HepG2 (cell line): ENCODE measurements at regions of chr7 and their contacts with region 1.

Region 1: GRCh38 chr7:114865564-114865963 is 56.3 kb upstream of the MDFIC start:
- DNase-seq: peak; percentile 8
- ATAC-seq: peak; percentile 81
- H3K4me3 ChIP-seq: no peak overlapping the region
- H3K27ac ChIP-seq: no peak overlapping the region
- H3K4me1 ChIP-seq: no peaks in the 10 kb centered on the region
- H3K27me3 ChIP-seq: no peaks in the 10 kb centered on the region
- CTCF ChIP-seq: peak; percentile 72
- EP300 ChIP-seq: no peak
- POLR2A ChIP-seq: no peak
- RAD21 ChIP-seq: 0 out of 2 replicates have a peak, but pooled peaks have one; percentile 27

Region 2: GRCh38 chr7:113314594-113314993 is 1551.0 kb before region 1 on chr7:
- CTCF ChIA-PET with region 1: no interaction called
- POLR2A ChIA-PET with region 1: no interaction called
- in situ Hi-C with region 1: no loop called
- intact Hi-C with region 1: no loop called
- DNase-seq: no peak
- ATAC-seq: no peak
- H3K4me3 ChIP-seq: no peak overlapping the region
- H3K27ac ChIP-seq: no peak overlapping the region
- H3K4me1 ChIP-seq: no peaks in the 10 kb centered on the region
- H3K27me3 ChIP-seq: no peaks in the 10 kb centered on the region
- CTCF ChIP-seq: no peak
- EP300 ChIP-seq: no peak
- POLR2A ChIP-seq: no peak
- RAD21 ChIP-seq: no peak

Region 3: DNA sequence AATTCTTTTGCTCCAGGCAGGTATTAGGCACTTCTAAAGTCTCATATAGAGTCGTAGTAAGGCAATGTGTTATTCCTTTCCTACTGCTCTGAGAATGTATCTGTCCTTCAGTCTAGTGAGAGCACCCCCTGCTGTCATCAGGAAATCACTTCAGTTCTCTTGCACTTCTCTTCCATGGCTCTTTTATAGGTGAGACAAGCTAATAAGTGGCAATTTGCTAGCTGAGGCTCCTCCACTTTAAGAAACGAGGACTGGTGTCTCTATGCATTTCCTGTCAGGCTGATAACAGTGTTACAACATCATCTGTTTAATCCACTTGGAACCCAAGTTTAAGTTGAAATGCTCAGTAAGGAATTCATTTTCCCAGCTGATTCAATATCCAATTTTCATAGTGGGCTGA is 814.4 kb after region 1 on chr7:
- CTCF ChIA-PET with region 1: interaction called, 3 read pairs
- POLR2A ChIA-PET with region 1: no interaction called
- in situ Hi-C with region 1: loop called (anchors 25 kb)
- intact Hi-C with region 1: no loop called
- DNase-seq: peak; percentile 58
- ATAC-seq: peak; percentile 76
- H3K4me3 ChIP-seq: no peak overlapping the region
- H3K27ac ChIP-seq: no peak overlapping the region
- H3K4me1 ChIP-seq: peaks cover 34% of the 10 kb centered on the region
- H3K27me3 ChIP-seq: no peaks in the 10 kb centered on the region
- CTCF ChIP-seq: peak; percentile 65
- EP300 ChIP-seq: no peak
- POLR2A ChIP-seq: no peak
- RAD21 ChIP-seq: 0 out of 2 replicates have a peak, but pooled peaks have one; percentile 27

Region 4: GRCh38 chr7:115707258-115708012 is 841.9 kb after region 1 on chr7:
- CTCF ChIA-PET with region 1: interaction called, 4 read pairs
- POLR2A ChIA-PET with region 1: no interaction called
- in situ Hi-C with region 1: no loop called
- intact Hi-C with region 1: loop called (anchors 1 kb)
- DNase-seq: peak; percentile 30
- ATAC-seq: peak; percentile 94
- H3K4me3 ChIP-seq: no peak overlapping the region
- H3K27ac ChIP-seq: no peak overlapping the region
- H3K4me1 ChIP-seq: no peaks in the 10 kb centered on the region
- H3K27me3 ChIP-seq: no peaks in the 10 kb centered on the region
- CTCF ChIP-seq: peak; percentile 67
- EP300 ChIP-seq: no peak
- POLR2A ChIP-seq: no peak
- RAD21 ChIP-seq: no peak

Region 5: GRCh38 chr7:115748131-115748738 is 882.7 kb after region 1 on chr7:
- CTCF ChIA-PET with region 1: interaction called, 5 read pairs
- POLR2A ChIA-PET with region 1: no interaction called
- in situ Hi-C with region 1: no loop called
- intact Hi-C with region 1: loop called (anchors 2 kb)
- DNase-seq: peak; percentile 41
- ATAC-seq: peak; percentile 92
- H3K4me3 ChIP-seq: no peak overlapping the region
- H3K27ac ChIP-seq: no peak overlapping the region
- H3K4me1 ChIP-seq: no peaks in the 10 kb centered on the region
- H3K27me3 ChIP-seq: no peaks in the 10 kb centered on the region
- CTCF ChIP-seq: peak; percentile 63
- EP300 ChIP-seq: no peak
- POLR2A ChIP-seq: no peak
- RAD21 ChIP-seq: no peak

Region 6: DNA sequence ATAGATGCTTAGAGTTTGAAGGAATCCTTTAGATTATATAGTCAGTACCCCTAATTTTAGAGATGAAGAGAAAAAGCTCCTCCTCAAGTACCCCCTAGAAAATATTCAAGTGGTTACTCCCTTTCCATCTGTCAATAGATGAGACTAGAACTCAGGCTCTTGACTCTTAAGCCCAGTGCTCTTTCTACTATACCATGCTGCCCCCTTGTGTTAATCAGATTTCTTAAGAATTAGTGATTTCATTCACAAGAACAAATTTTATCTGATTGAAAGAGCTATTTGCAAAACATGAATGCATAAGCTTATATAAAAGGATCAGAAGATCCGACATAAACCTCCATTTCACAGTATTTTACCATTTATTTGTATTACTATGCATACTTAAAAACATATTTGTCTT is 985.7 kb after region 1 on chr7:
- CTCF ChIA-PET with region 1: no interaction called
- POLR2A ChIA-PET with region 1: no interaction called
- in situ Hi-C with region 1: no loop called
- intact Hi-C with region 1: loop called (anchors 5 kb)
- DNase-seq: peak; percentile 24
- ATAC-seq: no peak
- H3K4me3 ChIP-seq: no peak overlapping the region
- H3K27ac ChIP-seq: no peak overlapping the region
- H3K4me1 ChIP-seq: no peaks in the 10 kb centered on the region
- H3K27me3 ChIP-seq: no peaks in the 10 kb centered on the region; a peak in 1 of 5 replicates
- CTCF ChIP-seq: peak; percentile 26; the same call in 1 of the 2 replicates
- EP300 ChIP-seq: no peak
- POLR2A ChIP-seq: no peak
- RAD21 ChIP-seq: no peak

Region 7: DNA sequence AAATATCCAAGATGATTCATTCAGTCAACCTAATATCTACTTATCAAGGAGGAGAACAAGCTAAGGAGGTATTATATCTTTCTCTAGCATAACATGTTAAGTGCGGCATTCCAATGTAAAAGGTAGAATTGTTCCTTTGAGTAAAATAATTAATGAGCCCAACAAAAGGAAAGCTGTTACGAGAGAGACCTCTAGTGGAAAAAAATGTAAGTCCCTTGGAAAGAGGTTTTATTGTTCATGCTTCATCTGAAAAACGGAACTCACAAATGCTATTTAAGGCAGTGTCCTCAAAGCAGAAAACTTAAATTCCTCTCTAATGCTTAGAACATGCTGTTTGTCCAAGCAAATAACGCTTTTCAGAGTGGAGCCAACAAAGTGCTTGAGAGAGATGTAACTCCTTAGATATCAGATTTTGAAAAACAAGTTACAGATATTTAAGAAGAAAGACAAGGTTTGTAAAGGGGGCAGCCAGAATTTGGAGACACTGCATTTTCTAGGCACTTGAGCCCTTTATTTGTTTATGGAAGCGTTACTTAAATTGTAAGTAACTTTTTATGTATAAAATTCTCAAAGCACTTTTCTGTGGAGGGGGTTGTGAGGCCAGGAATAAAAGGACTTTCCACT is 1045.1 kb after region 1 on chr7:
- CTCF ChIA-PET with region 1: no interaction called
- POLR2A ChIA-PET with region 1: no interaction called
- in situ Hi-C with region 1: no loop called
- intact Hi-C with region 1: loop called (anchors 5 kb)
- DNase-seq: peak; percentile 14
- ATAC-seq: no peak
- H3K4me3 ChIP-seq: no peak overlapping the region
- H3K27ac ChIP-seq: no peak overlapping the region
- H3K4me1 ChIP-seq: no peaks in the 10 kb centered on the region
- H3K27me3 ChIP-seq: no peaks in the 10 kb centered on the region
- CTCF ChIP-seq: peak; percentile 59
- EP300 ChIP-seq: no peak
- POLR2A ChIP-seq: no peak
- RAD21 ChIP-seq: no peak